Activated T-helper 1 cell treated with anti-CD3 and anti-CD28 coated beads, Interleukin-12 subunit alpha, Interleukin-12 subunit beta, Interleukin-2, Interleukin-4 antibody, amounts not matched to agents 30 ng/mL and 10 ng/mL and 1 ng/mL, durations not matched to agents 14 hours and 24 hours and 36 hours (primary cell): ENCODE measurements at regions of chr13 and their contacts with region 1.

Region 1: GRCh38 chr13:41639955-41640780 is 182.8 kb downstream of the RGCC start:
- DNase-seq: no peak
- H3K4me3 Mint-ChIP-seq: no peak overlapping the region
- H3K27ac Mint-ChIP-seq: no peak overlapping the region
- H3K4me1 Mint-ChIP-seq: peaks cover 8% of the 10 kb centered on the region
- H3K27me3 Mint-ChIP-seq: no peaks in the 10 kb centered on the region

Region 2: GRCh38 chr13:41596190-41596589 is 44.0 kb before region 1 on chr13:
- intact Hi-C with region 1: loop called (anchors 5 kb)
- DNase-seq: no peak
- H3K4me3 Mint-ChIP-seq: no peak overlapping the region
- H3K27ac Mint-ChIP-seq: no peak overlapping the region
- H3K4me1 Mint-ChIP-seq: peaks cover 5% of the 10 kb centered on the region
- H3K27me3 Mint-ChIP-seq: no peaks in the 10 kb centered on the region